ENCODE measurements at regions of chr6 and their contacts with region 1.

Region 1: DNA sequence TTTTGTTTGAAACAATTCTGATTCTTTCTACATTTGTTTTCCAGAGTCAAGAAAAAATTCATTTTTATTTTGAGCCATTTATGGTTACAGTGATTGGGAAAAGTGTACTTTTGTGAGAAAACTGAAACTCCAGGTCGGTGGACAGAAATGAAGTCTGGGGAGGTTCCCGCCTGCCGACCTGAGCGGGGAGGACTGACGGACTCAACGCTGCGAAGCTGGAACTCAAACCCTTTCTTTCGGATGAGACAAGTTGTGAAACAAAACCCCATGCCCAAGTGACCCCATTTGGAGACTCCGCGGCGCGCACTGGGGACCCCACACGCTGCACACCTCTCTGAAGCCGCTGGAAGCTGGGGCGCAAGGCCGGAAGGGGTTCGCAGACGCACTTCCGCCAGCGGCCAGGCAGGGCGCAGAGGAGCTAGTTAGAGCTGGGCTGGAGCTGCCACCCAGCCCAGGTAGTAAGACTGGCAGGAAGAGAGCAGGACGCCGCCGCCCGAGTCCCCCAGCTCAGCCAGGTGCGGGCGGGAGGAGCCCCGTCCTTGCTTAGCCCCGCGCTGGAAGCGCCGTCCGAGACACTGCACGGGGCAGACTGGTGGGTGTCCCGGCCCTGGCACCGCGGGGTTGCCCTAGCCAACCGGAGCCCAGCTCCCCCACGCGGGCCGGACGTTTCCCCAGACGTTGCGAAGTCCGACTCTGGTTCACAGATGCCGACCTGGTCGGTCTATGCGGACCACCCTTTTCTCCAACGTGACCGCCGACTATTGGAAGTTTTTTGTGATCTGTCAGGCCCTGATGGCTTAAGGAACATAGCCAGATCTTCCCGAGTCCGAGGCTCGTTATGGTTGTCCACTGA is 19.8 kb upstream of the ZSCAN16 start:
- DNase-seq: peak; percentile 86
- H3K4me3 Mint-ChIP-seq: peak overlapping the region; percentile 83
- H3K27ac Mint-ChIP-seq: peak overlapping the region; percentile 68
- H3K4me1 Mint-ChIP-seq: peaks cover 15% of the 10 kb centered on the region
- H3K27me3 Mint-ChIP-seq: peaks cover 27% of the 10 kb centered on the region

Region 2: DNA sequence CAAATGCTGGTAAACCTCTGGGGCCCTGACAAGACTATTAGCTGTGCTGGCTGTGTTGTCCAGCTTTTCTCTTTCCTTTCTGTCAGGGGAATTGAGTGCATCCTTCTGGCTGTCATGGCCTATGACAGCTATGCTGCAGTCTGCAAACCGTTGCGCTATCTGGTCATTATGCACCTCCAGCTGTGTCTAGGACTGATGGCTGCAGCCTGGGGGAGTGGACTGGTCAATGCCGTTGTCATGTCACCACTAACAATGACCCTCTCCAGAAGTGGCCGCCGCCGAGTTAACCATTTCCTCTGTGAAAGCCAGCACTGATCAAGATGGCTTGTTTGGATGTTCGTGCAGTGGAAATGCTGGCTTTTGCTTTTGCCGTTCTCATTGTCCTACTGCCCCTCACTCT is 127.2 kb before region 1 on chr6:
- CTCF ChIA-PET with region 1: no interaction called
- POLR2A ChIA-PET with region 1: no interaction called
- DNase-seq: no peak
- H3K4me3 Mint-ChIP-seq: no peak overlapping the region
- H3K27ac Mint-ChIP-seq: no peak overlapping the region
- H3K4me1 Mint-ChIP-seq: no peaks in the 10 kb centered on the region
- H3K27me3 Mint-ChIP-seq: peaks cover 9% of the 10 kb centered on the region

Region 3: DNA sequence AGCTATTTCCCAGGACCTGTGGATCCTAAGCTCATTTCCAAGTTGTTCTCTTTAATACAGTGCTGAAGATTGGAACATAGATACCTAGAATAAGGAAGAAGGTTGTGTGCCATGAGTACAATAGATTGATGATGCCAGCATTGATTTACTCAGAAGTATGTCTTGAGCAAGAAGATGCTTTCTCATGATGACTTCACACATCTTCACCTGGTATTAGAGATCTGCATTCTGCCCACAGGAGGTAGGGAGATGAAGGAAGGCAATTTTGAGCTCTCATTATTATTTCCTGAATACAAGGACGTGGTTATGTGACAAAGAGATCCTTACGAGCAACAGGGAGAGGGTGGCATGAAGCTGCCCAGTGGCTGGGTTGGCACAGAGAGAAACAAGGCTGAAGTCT is 44.2 kb before region 1 on chr6:
- CTCF ChIA-PET with region 1: no interaction called
- POLR2A ChIA-PET with region 1: no interaction called
- DNase-seq: no peak
- H3K4me3 Mint-ChIP-seq: no peak overlapping the region
- H3K27ac Mint-ChIP-seq: no peak overlapping the region
- H3K4me1 Mint-ChIP-seq: no peaks in the 10 kb centered on the region
- H3K27me3 Mint-ChIP-seq: peaks cover 18% of the 10 kb centered on the region

Region 4: DNA sequence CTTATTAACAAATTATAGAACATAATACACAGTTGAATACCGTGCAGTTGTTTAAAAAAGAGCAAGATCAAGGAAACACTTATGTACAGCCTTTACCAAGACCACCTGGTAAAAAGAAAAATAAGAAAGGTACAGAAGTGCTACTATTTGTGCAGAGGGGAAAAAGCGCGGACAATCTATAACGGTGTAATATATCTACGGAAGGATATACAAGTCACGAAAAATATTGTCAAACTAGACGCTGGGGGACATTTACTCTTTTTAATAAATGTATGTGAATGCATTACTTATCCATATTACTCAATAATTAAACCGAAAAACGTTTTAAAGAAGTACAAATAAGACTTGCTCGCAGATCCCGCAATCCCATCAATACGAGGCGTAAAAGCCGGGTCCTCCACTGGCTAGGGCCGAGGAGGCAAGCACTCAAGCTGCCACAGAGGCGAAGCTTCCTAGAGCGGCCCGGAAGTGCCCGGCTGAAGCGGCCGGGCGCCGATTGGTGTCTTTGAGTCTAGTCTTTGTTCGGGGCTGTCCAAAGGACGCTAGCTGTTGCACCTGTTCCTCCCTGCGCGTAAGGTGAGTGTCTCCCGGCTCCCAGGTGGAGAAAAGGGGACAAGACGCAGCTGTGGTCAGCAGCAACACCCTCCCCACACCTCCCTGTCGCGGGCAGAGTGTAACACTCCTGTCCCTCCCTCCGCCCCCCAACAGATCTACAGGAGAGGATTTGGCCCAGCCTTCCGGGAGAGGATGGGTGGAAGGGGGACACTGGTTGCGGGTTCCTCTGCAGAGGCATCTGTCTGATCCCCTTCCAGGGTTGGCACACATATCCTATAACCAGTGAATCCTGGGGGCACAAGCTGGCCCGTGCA is 19.7 kb after region 1 on chr6 and contains the start of gene ZSCAN16:
- CTCF ChIA-PET with region 1: interaction called, 6 read pairs
- POLR2A ChIA-PET with region 1: interaction called, 12 read pairs
- DNase-seq: peak; percentile 77
- H3K4me3 Mint-ChIP-seq: peak within 1 kb of the TSS; percentile 89
- H3K27ac Mint-ChIP-seq: peak within 1 kb of the TSS; percentile 78
- H3K4me1 Mint-ChIP-seq: peaks cover 45% of the 10 kb centered on the region
- H3K27me3 Mint-ChIP-seq: no peaks in the 10 kb centered on the region
- total RNA-seq, gene ZSCAN16: 5.3 TPM

Region 5: GRCh38 chr6:28355743-28356665 is 251.4 kb after region 1 on chr6:
- CTCF ChIA-PET with region 1: interaction called, 10 read pairs
- POLR2A ChIA-PET with region 1: interaction called, 4 read pairs
- DNase-seq: peak; percentile 61
- H3K4me3 Mint-ChIP-seq: peak overlapping the region; percentile 81
- H3K27ac Mint-ChIP-seq: peak overlapping the region; percentile 71
- H3K4me1 Mint-ChIP-seq: peaks cover 25% of the 10 kb centered on the region
- H3K27me3 Mint-ChIP-seq: no peaks in the 10 kb centered on the region

Region 6: GRCh38 chr6:28794175-28795002 is 689.8 kb after region 1 on chr6:
- CTCF ChIA-PET with region 1: no interaction called
- POLR2A ChIA-PET with region 1: no interaction called
- DNase-seq: no peak
- H3K4me3 Mint-ChIP-seq: no peak overlapping the region
- H3K27ac Mint-ChIP-seq: no peak overlapping the region
- H3K4me1 Mint-ChIP-seq: peaks cover 16% of the 10 kb centered on the region
- H3K27me3 Mint-ChIP-seq: peaks cover 77% of the 10 kb centered on the region

Measured in activated CD4-positive, alpha-beta memory T cell treated with anti-CD3 and anti-CD28 coated beads, Interleukin-2, amount 10 ng/mL, durations not matched to agents 7 days and 5 days (primary cell).